HCT116 (cell line): ENCODE measurements at regions of chr9 and their contacts with region 1.

Region 1: GRCh38 chr9:92140074-92140753 is 25.0 kb upstream of the SPTLC1 start:
- DNase-seq: peak; percentile 38
- ATAC-seq: peak; percentile 73
- H3K4me3 ChIP-seq: no peak overlapping the region; a peak in 1 of 4 replicates
- H3K27ac ChIP-seq: no peak overlapping the region
- H3K4me1 ChIP-seq: peaks cover 2 to 11% of the 10 kb centered on the region in 2 experiments; a peak in 3 of 4 replicates
- H3K27me3 ChIP-seq: 0 out of 2 replicates have a peak, but pooled peaks cover 3% of the 10 kb centered on the region
- CTCF ChIP-seq: peak in 2 of 3 experiments; percentile 92 to 97; a peak in 4 of 6 replicates
- POLR2A ChIP-seq: no peak
- RAD21 ChIP-seq: no peak

Region 2: GRCh38 chr9:91930475-91930874 is 209.7 kb before region 1 on chr9:
- CTCF ChIA-PET with region 1: no interaction called
- POLR2A ChIA-PET with region 1: no interaction called
- RAD21 ChIA-PET with region 1: no interaction called
- intact Hi-C with region 1: no loop called
- DNase-seq: no peak
- ATAC-seq: no peak
- H3K4me3 ChIP-seq: no peak overlapping the region
- H3K27ac ChIP-seq: no peak overlapping the region
- H3K4me1 ChIP-seq: no peaks in the 10 kb centered on the region
- H3K27me3 ChIP-seq: no peaks in the 10 kb centered on the region
- CTCF ChIP-seq: no peak
- POLR2A ChIP-seq: no peak
- RAD21 ChIP-seq: no peak

Region 3: DNA sequence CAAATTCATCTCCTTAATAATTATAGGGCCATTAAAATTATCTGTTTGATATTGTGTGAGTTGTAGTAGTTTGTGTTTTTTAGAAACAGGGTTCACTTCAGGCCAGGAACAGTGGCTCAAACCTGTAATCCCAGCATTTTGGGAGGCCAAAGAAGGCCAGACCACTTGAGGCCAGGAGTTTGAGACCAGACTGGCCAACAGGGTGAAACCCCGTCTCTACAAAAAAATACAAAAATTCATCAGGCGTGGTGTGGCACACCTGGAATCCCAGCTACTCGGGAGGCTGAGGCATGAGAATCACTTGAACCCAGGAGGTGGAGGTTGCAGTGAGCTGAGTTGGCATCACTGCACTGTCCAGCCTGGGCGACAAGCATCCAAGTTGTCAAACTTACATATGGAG is 96.3 kb after region 1 on chr9:
- CTCF ChIA-PET with region 1: interaction called, 5 read pairs
- POLR2A ChIA-PET with region 1: no interaction called
- RAD21 ChIA-PET with region 1: interaction called in 1 of 2 experiments, 3 read pairs
- intact Hi-C with region 1: loop called (anchors 5 kb)
- DNase-seq: no peak
- ATAC-seq: no peak
- H3K4me3 ChIP-seq: no peak overlapping the region
- H3K27ac ChIP-seq: no peak overlapping the region
- H3K4me1 ChIP-seq: no peaks in the 10 kb centered on the region
- H3K27me3 ChIP-seq: no peaks in the 10 kb centered on the region
- CTCF ChIP-seq: no peak
- POLR2A ChIP-seq: no peak
- RAD21 ChIP-seq: no peak

Region 4: GRCh38 chr9:92242260-92243136 is 102.3 kb after region 1 on chr9:
- CTCF ChIA-PET with region 1: interaction called, 12 read pairs
- POLR2A ChIA-PET with region 1: no interaction called
- RAD21 ChIA-PET with region 1: no interaction called
- intact Hi-C with region 1: loop called (anchors 5 kb)
- DNase-seq: no peak
- ATAC-seq: peak; percentile 57; the same call in 1 of the 2 replicates
- H3K4me3 ChIP-seq: no peak overlapping the region
- H3K27ac ChIP-seq: no peak overlapping the region
- H3K4me1 ChIP-seq: no peaks in the 10 kb centered on the region
- H3K27me3 ChIP-seq: no peaks in the 10 kb centered on the region
- CTCF ChIP-seq: peak in 1 of 3 experiments; percentile 14; a peak in 1 of 6 replicates
- POLR2A ChIP-seq: no peak
- RAD21 ChIP-seq: no peak; the same call in 1 of the 2 replicates

Region 5: GRCh38 chr9:92308893-92309292 is 168.7 kb after region 1 on chr9:
- CTCF ChIA-PET with region 1: no interaction called
- POLR2A ChIA-PET with region 1: no interaction called
- RAD21 ChIA-PET with region 1: no interaction called
- intact Hi-C with region 1: no loop called
- DNase-seq: no peak
- ATAC-seq: no peak
- H3K4me3 ChIP-seq: no peak overlapping the region
- H3K27ac ChIP-seq: no peak overlapping the region
- H3K4me1 ChIP-seq: no peaks in the 10 kb centered on the region
- H3K27me3 ChIP-seq: no peaks in the 10 kb centered on the region
- CTCF ChIP-seq: no peak
- POLR2A ChIP-seq: no peak
- RAD21 ChIP-seq: no peak

Region 6: DNA sequence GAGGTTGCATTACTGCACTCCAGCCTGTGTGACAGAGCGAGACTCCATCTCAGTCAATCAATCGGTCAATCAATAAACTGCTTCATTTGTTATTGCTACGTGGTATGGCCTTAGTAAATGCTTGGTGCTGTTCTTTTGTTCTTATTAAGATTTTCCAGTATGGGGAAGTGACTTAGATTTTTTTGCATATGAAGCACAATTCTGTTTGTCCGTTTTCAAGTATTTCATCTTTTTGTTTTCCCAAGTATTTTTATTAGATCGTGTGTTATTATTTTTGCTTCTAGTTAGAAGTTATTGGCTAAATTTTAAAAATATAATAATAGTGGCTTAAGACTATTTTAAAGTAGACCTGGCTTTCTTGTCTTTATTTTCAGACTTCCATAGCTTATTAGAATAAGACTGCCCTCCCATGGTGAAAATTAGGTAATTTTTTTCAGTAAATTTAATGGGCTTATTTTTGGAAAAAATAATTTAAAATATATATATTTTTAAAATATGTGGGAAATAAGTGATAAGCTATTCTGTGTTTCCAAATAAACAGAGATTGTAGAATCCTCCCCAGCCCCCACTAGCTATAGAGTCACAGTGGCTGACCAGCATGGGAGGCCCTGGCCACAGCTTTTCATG is 298.8 kb after region 1 on chr9:
- CTCF ChIA-PET with region 1: interaction called, 24 read pairs
- POLR2A ChIA-PET with region 1: no interaction called
- RAD21 ChIA-PET with region 1: interaction called in 1 of 2 experiments, 3 read pairs
- intact Hi-C with region 1: loop called (anchors 5 kb)
- DNase-seq: peak; percentile 3
- ATAC-seq: no peak
- H3K4me3 ChIP-seq: no peak overlapping the region
- H3K27ac ChIP-seq: no peak overlapping the region
- H3K4me1 ChIP-seq: no peaks in the 10 kb centered on the region
- H3K27me3 ChIP-seq: no peaks in the 10 kb centered on the region
- CTCF ChIP-seq: peak in 1 of 3 experiments; percentile 62; a peak in 2 of 6 replicates
- POLR2A ChIP-seq: no peak
- RAD21 ChIP-seq: peak; percentile 59

Region 7: GRCh38 chr9:92455217-92455616 is 315.0 kb after region 1 on chr9:
- CTCF ChIA-PET with region 1: interaction called, 11 read pairs
- POLR2A ChIA-PET with region 1: no interaction called
- RAD21 ChIA-PET with region 1: no interaction called
- intact Hi-C with region 1: loop called (anchors 2 kb)
- DNase-seq: peak; percentile 18
- ATAC-seq: peak; percentile 91
- H3K4me3 ChIP-seq: no peak overlapping the region
- H3K27ac ChIP-seq: no peak overlapping the region
- H3K4me1 ChIP-seq: no peaks in the 10 kb centered on the region
- H3K27me3 ChIP-seq: no peaks in the 10 kb centered on the region
- CTCF ChIP-seq: peak; percentile 50 to 73 (median 73); a peak in 5 of 6 replicates
- POLR2A ChIP-seq: no peak
- RAD21 ChIP-seq: peak; percentile 64

Region 8: DNA sequence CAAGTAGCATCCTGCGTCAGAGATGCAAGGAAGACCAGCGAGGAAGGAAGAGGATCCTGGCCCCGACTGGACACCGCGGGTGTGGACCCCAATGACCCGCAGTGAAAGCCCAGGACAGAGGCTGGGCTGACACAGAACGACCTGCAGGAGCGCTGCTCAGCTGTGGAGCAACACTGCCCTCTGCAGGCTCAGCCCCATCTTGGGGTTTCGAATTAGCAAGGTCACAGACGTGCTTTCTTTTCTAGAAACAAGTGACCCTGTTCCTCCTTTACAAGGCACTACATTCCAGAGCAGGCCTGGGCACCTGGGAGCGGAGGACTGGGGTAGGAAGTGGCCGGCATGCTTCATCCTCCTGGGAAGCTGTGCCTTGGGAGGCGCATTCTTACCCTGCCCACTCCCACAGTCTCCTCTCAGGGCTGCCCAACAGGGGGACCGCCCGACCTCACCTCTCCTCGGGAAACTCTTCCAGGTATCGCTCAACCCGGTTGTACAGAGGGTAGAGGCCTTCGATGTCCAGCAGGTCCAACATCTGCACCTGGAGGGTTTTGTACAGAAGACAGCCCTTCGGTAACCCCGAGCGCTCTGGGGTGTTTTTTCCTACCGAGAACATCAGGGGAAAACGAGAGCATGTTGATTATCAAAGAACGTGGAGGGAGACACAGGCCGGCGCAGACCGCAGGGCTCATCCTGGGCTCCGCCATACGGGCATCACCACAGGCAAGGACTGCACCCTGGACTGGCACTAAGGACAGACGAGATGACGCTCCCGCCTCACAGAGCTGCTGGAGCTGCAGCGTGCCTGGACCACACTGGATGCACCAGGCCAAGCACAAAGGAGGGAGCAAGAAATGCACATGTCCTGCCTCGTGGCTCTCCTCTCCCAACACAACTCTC is 494.7 kb after region 1 on chr9:
- CTCF ChIA-PET with region 1: interaction called, 5 read pairs
- POLR2A ChIA-PET with region 1: no interaction called
- RAD21 ChIA-PET with region 1: interaction called in 1 of 2 experiments, 3 read pairs
- intact Hi-C with region 1: loop called (anchors 1 kb)
- DNase-seq: peak; percentile 41
- ATAC-seq: peak; percentile 96
- H3K4me3 ChIP-seq: no peak overlapping the region
- H3K27ac ChIP-seq: no peak overlapping the region
- H3K4me1 ChIP-seq: no peaks in the 10 kb centered on the region
- H3K27me3 ChIP-seq: no peaks in the 10 kb centered on the region
- CTCF ChIP-seq: peak; percentile 96 to 97 (median 97)
- POLR2A ChIP-seq: no peak
- RAD21 ChIP-seq: peak; percentile 91

Region 9: GRCh38 chr9:92790542-92791527 is 650.6 kb after region 1 on chr9:
- CTCF ChIA-PET with region 1: interaction called, 38 read pairs
- POLR2A ChIA-PET with region 1: no interaction called
- RAD21 ChIA-PET with region 1: interaction called, 3 read pairs
- intact Hi-C with region 1: loop called (anchors 5 kb)
- DNase-seq: peak; percentile 65
- ATAC-seq: peak; percentile 99
- H3K4me3 ChIP-seq: no peak overlapping the region
- H3K27ac ChIP-seq: no peak overlapping the region
- H3K4me1 ChIP-seq: 0 out of 4 replicates have a peak, but pooled peaks cover 0 to 2% of the 10 kb centered on the region in 2 experiments
- H3K27me3 ChIP-seq: no peaks in the 10 kb centered on the region
- CTCF ChIP-seq: peak; percentile 79 to 94 (median 91)
- POLR2A ChIP-seq: no peak
- RAD21 ChIP-seq: peak; percentile 97